ENCODE measurements at regions of chr5 and their contacts with region 1.

Region 1: GRCh38 chr5:88785391-88786219 is 97.4 kb downstream of the MEF2C start:
- DNase-seq: peak; percentile 95
- ATAC-seq: peak; percentile 95
- H3K4me3 ChIP-seq: peak overlapping the region; percentile 51
- H3K27ac ChIP-seq: peak overlapping the region; percentile 97
- H3K4me1 ChIP-seq: peaks cover 28% of the 10 kb centered on the region
- H3K27me3 ChIP-seq: no peaks in the 10 kb centered on the region
- CTCF ChIP-seq: no peak

Region 2: GRCh38 chr5:88746438-88746882 is 39.1 kb before region 1 on chr5:
- CTCF ChIA-PET with region 1: no interaction called
- POLR2A ChIA-PET with region 1: no interaction called
- intact Hi-C with region 1: loop called (anchors 5 kb)
- DNase-seq: no peak
- ATAC-seq: no peak
- H3K4me3 ChIP-seq: no peak overlapping the region
- H3K27ac ChIP-seq: no peak overlapping the region
- H3K4me1 ChIP-seq: peaks cover 12% of the 10 kb centered on the region
- H3K27me3 ChIP-seq: no peaks in the 10 kb centered on the region
- CTCF ChIP-seq: no peak

Region 3: DNA sequence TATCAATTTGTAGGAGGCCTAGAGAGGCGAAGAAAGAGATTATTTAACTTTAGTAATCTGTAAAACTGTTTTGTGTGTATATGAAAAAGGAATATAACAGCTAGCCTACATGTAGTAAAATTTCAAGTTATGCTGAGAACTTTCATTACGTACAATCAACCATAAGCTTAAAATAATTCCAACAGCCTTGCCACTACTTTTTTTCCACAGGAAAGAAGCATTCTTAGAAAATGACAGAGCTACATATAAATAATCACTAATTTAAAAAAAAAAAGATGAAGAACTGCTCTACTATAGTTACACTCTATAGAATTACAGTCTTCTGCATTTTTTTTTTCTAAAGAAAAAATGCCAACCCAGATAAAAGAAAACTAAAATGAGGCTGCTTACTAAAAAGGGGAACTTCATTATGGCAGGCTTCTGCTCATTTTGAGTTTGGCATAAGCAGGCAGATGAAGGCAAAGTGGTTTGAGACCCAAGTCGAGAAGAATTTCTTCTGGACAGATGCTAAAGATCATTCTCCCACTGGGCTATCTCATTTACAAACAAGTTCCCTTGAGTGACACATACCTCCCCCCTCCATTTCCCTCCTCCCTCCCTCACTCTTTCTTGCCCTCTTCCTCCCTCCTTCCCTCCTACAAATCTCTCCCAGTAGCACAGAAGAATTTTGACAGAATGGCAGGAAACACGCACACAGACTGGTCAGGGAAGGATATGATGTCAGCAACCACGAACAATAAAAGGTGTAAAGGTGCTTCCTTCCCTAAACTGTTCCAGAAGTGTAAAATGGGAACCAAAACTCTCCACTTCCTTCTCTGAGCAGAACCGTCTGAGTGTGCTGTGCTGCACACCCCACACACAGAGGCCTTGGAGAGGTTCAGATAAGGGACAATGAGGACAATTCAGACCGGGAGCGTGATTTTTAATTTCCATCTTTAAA is 41.3 kb after region 1 on chr5:
- CTCF ChIA-PET with region 1: no interaction called
- POLR2A ChIA-PET with region 1: no interaction called
- intact Hi-C with region 1: loop called (anchors 5 kb)
- DNase-seq: peak; percentile 70
- ATAC-seq: peak; percentile 72
- H3K4me3 ChIP-seq: no peak overlapping the region
- H3K27ac ChIP-seq: peak overlapping the region; percentile 76
- H3K4me1 ChIP-seq: peaks cover 30% of the 10 kb centered on the region
- H3K27me3 ChIP-seq: no peaks in the 10 kb centered on the region
- CTCF ChIP-seq: no peak

Region 4: DNA sequence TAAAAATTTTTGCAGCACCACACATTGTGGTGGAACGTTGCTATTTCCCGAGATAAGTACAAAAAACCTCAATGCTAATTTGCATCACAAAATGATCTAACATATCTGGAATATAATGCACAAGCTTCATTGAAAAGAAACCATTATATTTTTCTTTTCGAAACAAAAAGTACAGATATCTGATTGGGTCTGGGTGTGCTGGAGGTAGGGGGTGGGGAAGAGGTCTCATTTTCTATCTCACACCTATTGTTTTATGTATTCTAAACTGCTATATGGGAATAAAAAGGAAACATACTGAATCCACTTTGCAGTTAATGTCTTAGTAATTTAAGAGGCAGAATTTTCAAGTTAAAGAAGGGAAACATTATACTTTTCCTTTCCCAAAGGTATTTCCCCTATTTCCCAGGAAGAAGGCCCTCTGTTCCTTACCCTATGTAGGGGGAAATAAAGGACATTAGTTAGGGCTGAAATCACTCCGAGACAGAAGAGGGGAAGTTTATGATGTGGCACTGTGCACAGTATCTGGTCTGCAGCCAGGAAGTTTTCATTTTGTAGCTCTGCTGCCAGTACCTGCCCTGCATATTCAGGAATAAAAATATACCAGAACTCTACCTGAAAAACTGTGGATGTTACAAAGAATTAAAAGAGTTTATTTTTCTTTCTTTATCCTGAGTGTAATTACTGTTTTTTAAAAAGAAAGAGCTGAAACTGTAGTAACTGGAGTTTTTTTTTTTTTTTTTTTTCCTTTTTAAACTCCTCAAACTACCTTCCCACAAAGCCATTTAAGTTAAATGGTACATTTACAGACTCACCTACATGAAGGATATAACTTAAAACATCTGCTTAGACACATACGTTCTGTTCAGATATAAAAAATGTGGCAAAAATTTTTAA is 90.0 kb after region 1 on chr5:
- CTCF ChIA-PET with region 1: no interaction called
- POLR2A ChIA-PET with region 1: no interaction called
- intact Hi-C with region 1: loop called (anchors 2 kb)
- DNase-seq: peak; percentile 49
- ATAC-seq: peak; percentile 56
- H3K4me3 ChIP-seq: peak overlapping the region; percentile 25; the same call in 1 of the 2 replicates
- H3K27ac ChIP-seq: 0 out of 2 replicates have a peak overlapping the region, but pooled peaks have one; percentile 9
- H3K4me1 ChIP-seq: peaks cover 54% of the 10 kb centered on the region
- H3K27me3 ChIP-seq: no peaks in the 10 kb centered on the region
- CTCF ChIP-seq: no peak